ENCODE measurements at regions of chr10 and their contacts with region 1.

Region 1: GRCh38 chr10:14959276-14960057 is at the start of gene MEIG1:
- DNase-seq: peak in 1 of 2 donors; percentile 94
- H3K4me3 ChIP-seq: peak within 1 kb of the TSS; percentile 65 to 76
- H3K27ac ChIP-seq: peak within 1 kb of the TSS; percentile 91
- H3K4me1 ChIP-seq: no peaks in the 10 kb centered on the region
- H3K27me3 ChIP-seq: no peaks in the 10 kb centered on the region
- CTCF ChIP-seq: no peak
- POLR2A ChIP-seq: no peak
- total RNA-seq, gene MEIG1: not detected

Region 2: GRCh38 chr10:15097011-15097812 is 137.7 kb after region 1 on chr10 and contains the start of gene RPP38:
- intact Hi-C with region 1: loop called (anchors 10 kb)
- DNase-seq: peak in 1 of 2 donors; percentile 96
- H3K4me3 ChIP-seq: peak within 1 kb of the TSS; percentile 77 to 92
- H3K27ac ChIP-seq: peak within 1 kb of the TSS; percentile 93
- H3K4me1 ChIP-seq: peaks cover 36% of the 10 kb centered on the region
- H3K27me3 ChIP-seq: no peaks in the 10 kb centered on the region
- CTCF ChIP-seq: no peak
- POLR2A ChIP-seq: no peak
- total RNA-seq, gene RPP38: 14.2 TPM

Measured in vagina (tissue), 2 donors.